IMR-90 (cell line): ENCODE measurements at regions of chr6 and their contacts with region 1.

Region 1: DNA sequence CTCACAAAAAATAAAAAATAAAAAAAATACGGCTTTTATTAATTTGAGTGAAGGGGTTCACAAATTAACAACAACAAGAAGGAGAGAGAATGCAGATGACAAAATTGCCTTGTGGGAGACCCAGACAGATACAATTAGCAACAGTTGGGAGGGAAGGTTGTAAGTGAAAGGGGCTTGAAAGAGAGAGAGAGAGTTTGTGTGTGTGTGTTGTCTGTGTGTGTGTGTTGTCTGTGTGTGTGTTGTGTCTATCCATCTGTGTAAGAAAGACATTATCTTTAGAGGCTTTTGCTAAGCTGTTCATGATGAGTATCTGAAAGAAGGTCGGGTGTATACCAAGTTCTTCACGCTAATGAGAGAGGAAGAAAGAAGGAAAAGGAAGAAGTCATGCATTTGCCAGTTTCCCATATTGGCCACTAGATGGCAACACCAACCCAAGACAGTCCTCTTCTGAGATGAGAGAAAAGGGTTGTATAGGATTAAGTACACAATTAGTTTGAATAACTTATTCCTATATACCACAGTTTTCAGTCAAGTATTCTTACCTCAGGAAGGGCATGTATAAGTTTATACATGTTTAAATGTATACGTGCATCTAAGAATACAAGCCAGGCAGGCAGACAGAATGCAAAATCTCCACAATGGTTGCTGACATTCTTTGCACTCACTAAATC is 63.7 kb upstream of the CD2AP start:
- DNase-seq: peak; percentile 69
- ATAC-seq: peak; percentile 95
- H3K4me3 ChIP-seq: peak overlapping the region; percentile 25
- H3K27ac ChIP-seq: no peak overlapping the region
- H3K4me1 ChIP-seq: peaks cover 2% of the 10 kb centered on the region; the same call in 1 of the 2 replicates
- H3K27me3 ChIP-seq: no peaks in the 10 kb centered on the region
- CTCF ChIP-seq: peak; percentile 91
- POLR2A ChIP-seq: no peak
- RAD21 ChIP-seq: peak; percentile 82

Region 2: DNA sequence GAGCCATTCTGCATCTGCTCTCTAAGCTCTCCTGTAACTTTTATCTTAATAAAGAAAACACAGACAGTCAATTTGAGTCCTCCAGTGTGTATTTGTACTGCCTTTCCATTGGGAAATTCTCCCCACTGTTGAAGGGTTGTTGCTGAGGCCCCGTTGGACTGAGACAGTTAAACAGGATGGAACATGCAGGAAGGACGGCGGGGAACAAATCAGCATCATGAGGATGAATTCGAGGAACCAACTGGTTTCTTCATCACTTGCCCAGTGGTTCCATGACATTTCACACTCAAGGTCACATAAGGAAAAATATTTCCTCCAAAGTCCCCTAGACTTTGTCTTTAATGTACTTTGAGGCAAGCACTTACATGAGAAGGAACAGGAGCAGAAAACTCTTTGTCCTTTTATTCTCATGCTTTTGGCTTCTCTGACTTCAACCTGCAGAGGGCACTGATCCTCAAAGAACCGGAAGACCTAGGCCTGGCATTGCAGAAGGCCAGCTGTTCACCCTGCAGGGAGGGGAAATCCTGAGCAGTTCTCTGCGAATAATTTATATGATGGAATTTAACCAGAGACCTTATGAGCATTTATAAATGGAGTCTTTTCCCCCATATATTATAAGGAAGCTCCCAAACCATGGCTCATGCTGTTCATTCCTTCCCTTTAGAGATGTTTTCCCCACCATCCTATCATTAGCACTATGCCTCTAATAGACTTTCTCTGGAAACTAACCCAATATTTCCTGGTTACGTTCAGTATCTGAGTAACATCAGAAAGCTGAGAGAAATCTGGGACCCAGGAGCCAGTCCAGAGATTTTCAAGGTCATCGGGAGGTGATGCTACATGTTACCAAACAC is 316.6 kb before region 1 on chr6:
- CTCF ChIA-PET with region 1: no interaction called
- POLR2A ChIA-PET with region 1: no interaction called
- dilution Hi-C with region 1: no loop called
- in situ Hi-C with region 1: no loop called
- intact Hi-C with region 1: loop called (anchors 1 kb)
- DNase-seq: peak; percentile 85
- ATAC-seq: peak; percentile 90
- H3K4me3 ChIP-seq: no peak overlapping the region
- H3K27ac ChIP-seq: no peak overlapping the region
- H3K4me1 ChIP-seq: no peaks in the 10 kb centered on the region
- H3K27me3 ChIP-seq: 0 out of 2 replicates have a peak, but pooled peaks cover 2% of the 10 kb centered on the region
- CTCF ChIP-seq: peak; percentile 95
- POLR2A ChIP-seq: 0 out of 2 replicates have a peak, but pooled peaks have one; percentile 23
- RAD21 ChIP-seq: peak; percentile 98

Region 3: GRCh38 chr6:47603995-47604394 is 190.1 kb after region 1 on chr6:
- CTCF ChIA-PET with region 1: no interaction called
- POLR2A ChIA-PET with region 1: no interaction called
- dilution Hi-C with region 1: no loop called
- in situ Hi-C with region 1: no loop called
- intact Hi-C with region 1: loop called (anchors 10 kb)
- DNase-seq: no peak
- ATAC-seq: no peak
- H3K4me3 ChIP-seq: no peak overlapping the region
- H3K27ac ChIP-seq: no peak overlapping the region
- H3K4me1 ChIP-seq: no peaks in the 10 kb centered on the region
- H3K27me3 ChIP-seq: no peaks in the 10 kb centered on the region
- CTCF ChIP-seq: no peak
- POLR2A ChIP-seq: no peak
- RAD21 ChIP-seq: no peak

Region 4: DNA sequence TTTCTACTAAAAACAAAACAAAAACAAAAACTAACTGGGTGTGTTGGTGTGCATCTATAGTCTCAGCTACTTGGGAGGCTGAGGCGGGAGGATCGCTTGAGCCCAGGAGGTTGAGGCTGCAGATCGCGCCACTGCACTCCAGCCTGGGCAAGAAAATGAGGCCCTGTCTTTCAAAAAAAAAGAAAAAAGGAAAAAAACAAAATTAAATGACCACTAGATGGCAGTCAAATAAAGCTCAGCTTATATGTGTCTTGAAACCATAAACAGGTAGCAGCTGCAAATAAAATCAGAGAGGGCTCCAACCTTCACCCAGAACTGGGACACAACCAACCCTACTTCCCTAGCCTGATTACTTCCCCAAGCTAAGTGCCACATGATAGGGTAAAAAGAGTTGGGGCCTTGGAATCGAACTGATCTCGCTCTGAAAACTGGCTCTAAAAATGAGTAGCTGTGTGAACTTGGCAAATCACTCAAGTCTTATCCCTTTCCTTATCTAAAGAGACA is 217.4 kb after region 1 on chr6:
- CTCF ChIA-PET with region 1: interaction called, 3 read pairs
- POLR2A ChIA-PET with region 1: no interaction called
- dilution Hi-C with region 1: no loop called
- in situ Hi-C with region 1: no loop called
- intact Hi-C with region 1: loop called (anchors 1 kb)
- DNase-seq: peak; percentile 45
- ATAC-seq: peak; percentile 47
- H3K4me3 ChIP-seq: no peak overlapping the region
- H3K27ac ChIP-seq: no peak overlapping the region
- H3K4me1 ChIP-seq: no peaks in the 10 kb centered on the region
- H3K27me3 ChIP-seq: no peaks in the 10 kb centered on the region
- CTCF ChIP-seq: peak; percentile 66
- POLR2A ChIP-seq: no peak
- RAD21 ChIP-seq: peak; percentile 66

Region 5: DNA sequence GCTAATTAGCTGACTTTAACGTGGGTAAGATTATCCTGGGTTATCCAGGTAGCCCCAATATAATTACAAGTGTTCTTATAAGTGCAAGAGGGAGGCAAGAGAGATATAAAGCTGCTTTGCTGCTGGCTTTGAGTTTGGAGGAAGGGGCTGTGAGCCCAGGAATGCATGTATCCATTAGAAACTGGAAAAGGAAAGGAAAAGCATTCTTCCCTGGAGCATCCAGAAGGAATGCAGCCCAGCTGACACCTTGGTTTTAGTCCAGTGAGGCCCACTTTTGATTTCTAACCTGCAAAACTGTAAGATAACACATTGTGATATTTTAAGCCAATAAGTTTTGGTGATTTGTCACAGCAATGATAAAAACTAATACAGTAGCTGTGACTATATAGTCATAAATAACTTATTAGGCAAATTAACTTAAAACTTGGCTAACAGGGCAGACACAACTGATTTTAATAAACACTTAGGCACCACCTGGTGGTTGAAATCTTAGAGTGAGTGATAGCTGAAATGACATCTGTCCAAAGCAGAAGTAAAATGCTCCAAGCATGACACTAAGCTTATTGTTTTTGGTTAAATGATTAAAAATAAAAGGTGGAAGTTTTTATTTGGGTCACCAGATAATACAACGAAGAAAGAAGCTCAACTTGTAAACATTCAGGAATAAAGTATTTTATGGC is 320.1 kb after region 1 on chr6:
- CTCF ChIA-PET with region 1: interaction called, 3 read pairs
- POLR2A ChIA-PET with region 1: no interaction called
- dilution Hi-C with region 1: no loop called
- in situ Hi-C with region 1: no loop called
- intact Hi-C with region 1: loop called (anchors 1 kb)
- DNase-seq: peak; percentile 4
- ATAC-seq: no peak
- H3K4me3 ChIP-seq: no peak overlapping the region
- H3K27ac ChIP-seq: no peak overlapping the region
- H3K4me1 ChIP-seq: no peaks in the 10 kb centered on the region
- H3K27me3 ChIP-seq: no peaks in the 10 kb centered on the region
- CTCF ChIP-seq: peak; percentile 19; the same call in 1 of the 2 replicates
- POLR2A ChIP-seq: no peak
- RAD21 ChIP-seq: peak; percentile 18; the same call in 1 of the 2 replicates

Region 6: DNA sequence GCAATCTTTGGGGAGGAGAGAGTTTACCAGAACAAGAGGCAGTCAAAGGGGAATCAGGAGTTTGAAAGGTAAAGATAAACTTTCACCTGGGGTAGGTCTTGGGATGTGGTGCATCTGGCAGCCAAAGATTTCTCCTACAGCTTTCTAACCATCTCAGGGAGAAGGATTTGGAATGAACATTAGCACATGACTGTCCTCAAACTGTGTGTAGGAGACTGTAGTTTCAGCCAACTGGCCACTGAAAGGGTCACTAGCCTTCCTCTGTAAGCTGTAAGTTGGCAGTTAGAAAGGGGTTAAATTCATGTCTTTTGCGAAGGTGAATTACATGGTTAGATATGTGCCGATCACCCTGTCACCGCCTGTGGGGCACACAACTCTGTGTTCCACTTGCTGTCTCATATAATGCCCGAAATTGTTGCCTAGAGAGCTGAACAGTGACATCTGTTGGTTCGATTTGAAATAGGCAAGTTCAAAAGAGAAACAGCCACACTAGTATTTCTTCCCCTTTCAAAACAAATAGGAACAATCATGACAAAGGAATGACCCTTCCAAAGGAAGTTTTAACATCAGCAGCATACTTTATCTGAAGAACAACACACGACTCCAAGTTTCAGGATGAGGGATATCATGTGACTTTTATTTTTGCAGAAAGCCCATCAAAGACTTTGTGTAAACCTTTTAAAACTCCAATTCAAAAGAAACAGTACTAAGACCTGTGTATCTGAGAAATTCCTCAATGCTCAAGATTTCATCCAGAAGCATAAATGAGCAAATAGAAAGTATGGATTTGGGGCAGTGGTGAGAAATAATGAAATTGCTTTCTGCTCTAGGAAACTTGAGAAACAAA is 366.8 kb after region 1 on chr6:
- CTCF ChIA-PET with region 1: interaction called, 3 read pairs
- POLR2A ChIA-PET with region 1: no interaction called
- dilution Hi-C with region 1: no loop called
- in situ Hi-C with region 1: loop called (anchors 10 kb)
- intact Hi-C with region 1: loop called (anchors 1 kb)
- DNase-seq: peak; percentile 73
- ATAC-seq: peak; percentile 98
- H3K4me3 ChIP-seq: no peak overlapping the region
- H3K27ac ChIP-seq: no peak overlapping the region
- H3K4me1 ChIP-seq: no peaks in the 10 kb centered on the region
- H3K27me3 ChIP-seq: peaks cover 3% of the 10 kb centered on the region; the same call in 1 of the 2 replicates
- CTCF ChIP-seq: peak; percentile 76
- POLR2A ChIP-seq: no peak
- RAD21 ChIP-seq: peak; percentile 66

Region 7: GRCh38 chr6:48859562-48860123 is 1445.8 kb after region 1 on chr6:
- CTCF ChIA-PET with region 1: no interaction called
- POLR2A ChIA-PET with region 1: no interaction called
- dilution Hi-C with region 1: no loop called
- in situ Hi-C with region 1: no loop called
- intact Hi-C with region 1: no loop called
- DNase-seq: no peak
- ATAC-seq: no peak
- H3K4me3 ChIP-seq: no peak overlapping the region
- H3K27ac ChIP-seq: no peak overlapping the region
- H3K4me1 ChIP-seq: no peaks in the 10 kb centered on the region
- H3K27me3 ChIP-seq: no peaks in the 10 kb centered on the region
- CTCF ChIP-seq: no peak
- POLR2A ChIP-seq: no peak
- RAD21 ChIP-seq: no peak